ENCODE measurements at regions of chr10 and their contacts with region 1.

Region 1: DNA sequence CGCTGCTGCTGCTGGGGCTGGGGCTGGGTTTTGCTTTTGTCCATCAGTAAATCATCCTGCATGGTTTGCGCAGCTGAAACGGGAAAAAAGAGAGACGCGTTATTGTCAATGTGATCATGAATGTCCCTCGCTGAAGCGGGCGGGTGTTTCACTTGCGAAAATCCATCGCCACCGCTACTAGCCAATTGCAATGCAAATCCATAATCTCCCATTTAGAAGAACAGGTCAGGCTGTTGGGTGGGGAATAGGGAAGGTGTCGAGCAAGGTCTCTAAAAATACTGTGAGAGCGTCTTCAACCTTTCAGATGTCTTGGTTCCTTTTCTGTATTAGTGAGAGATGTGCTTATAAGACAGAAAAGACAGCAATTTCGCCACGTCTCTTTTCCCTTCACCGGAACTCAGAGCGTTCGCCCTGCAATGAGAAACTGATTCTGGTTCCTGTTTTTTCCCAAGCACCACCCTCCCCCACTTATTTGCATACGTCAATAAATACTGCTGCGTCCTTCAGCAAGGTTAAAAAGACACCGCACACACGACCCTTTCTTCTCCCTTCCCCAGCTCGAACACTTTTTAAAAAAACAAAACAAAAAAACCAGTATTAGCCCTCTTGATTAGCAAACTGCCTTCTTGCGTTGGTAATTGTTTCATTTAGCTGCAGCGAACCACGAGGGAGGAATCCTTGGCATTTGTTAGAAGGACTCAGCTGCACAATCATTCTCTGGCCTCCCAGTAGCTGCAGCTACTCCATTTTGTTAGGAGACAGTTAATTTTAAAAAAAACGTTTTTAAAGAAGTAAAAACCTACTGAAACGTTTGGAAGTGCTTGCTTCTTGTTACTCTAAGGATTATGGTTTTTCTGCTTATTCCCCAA is 50.4 kb downstream of the CPEB3 start:
- DNase-seq: peak; percentile 38
- H3K4me3 Mint-ChIP-seq: peak overlapping the region; percentile 72
- H3K27ac Mint-ChIP-seq: no peak overlapping the region
- H3K4me1 Mint-ChIP-seq: peaks cover 33% of the 10 kb centered on the region
- H3K27me3 Mint-ChIP-seq: peaks cover 9% of the 10 kb centered on the region

Region 2: DNA sequence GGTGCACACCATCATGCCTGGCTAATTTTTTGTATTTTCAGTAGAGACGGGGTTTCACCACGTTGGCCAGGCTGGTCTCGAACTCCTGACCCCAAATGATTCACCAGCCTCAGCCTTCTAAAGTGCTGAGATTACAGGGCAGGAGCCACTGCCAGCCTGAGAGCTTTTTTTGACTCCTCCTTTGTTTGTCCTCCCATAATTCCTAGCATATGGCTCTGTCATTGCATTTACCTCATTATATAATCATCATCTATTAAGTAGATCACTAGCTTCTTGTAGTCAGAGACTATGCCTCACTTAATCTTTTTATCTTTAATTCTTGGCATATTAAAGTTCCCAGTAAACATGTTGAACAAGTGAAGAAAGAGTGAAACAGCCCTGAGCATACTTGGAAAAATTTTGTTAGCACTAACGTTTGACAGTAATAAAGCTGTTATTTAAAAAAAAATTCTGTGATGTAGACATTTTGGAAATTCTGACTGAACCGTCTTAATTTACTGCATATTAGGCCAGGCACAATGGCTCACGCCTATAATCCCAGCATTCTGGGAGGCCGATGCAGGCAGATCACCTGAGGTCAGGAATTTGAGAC is 31.7 kb before region 1 on chr10:
- CTCF ChIA-PET with region 1: no interaction called
- POLR2A ChIA-PET with region 1: no interaction called
- intact Hi-C with region 1: loop called (anchors 2 kb)
- DNase-seq: peak; percentile 14
- H3K4me3 Mint-ChIP-seq: no peak overlapping the region
- H3K27ac Mint-ChIP-seq: no peak overlapping the region
- H3K4me1 Mint-ChIP-seq: peaks cover 15% of the 10 kb centered on the region
- H3K27me3 Mint-ChIP-seq: peaks cover 4% of the 10 kb centered on the region

Region 3: DNA sequence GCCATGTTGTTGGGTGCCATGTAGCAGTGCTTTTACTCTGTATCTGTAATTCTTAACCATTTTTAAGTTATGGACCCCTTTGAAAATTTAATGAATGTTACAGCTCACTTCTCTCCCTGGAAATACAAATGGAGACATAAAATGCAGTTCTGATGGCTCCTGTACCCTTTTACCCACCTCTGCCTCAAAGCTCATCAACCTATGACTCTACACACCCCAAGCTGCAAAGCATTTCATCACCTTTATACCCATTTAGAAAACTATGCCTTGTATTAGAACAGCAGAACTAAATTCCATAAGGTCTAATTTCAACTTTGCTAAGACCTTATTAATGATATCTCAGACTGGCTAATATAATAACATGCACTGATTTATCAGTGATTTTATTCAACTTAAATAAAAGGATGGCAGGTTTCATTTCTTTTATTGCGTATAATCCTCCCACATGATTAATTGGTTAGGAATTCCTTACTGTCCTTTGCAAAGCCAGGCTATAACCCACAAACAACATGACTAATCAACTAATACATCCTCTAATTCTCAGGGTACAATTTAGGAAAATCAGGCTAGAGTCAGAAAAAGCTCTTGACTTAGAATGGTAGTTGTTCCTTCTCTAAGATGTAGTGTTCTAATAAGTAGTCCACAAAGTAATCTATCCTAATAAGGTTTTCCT is 17.8 kb before region 1 on chr10:
- CTCF ChIA-PET with region 1: no interaction called
- POLR2A ChIA-PET with region 1: no interaction called
- intact Hi-C with region 1: no loop called
- DNase-seq: no peak
- H3K4me3 Mint-ChIP-seq: no peak overlapping the region
- H3K27ac Mint-ChIP-seq: no peak overlapping the region
- H3K4me1 Mint-ChIP-seq: no peaks in the 10 kb centered on the region
- H3K27me3 Mint-ChIP-seq: no peaks in the 10 kb centered on the region

Measured in activated CD4-positive, alpha-beta memory T cell treated with anti-CD3 and anti-CD28 coated beads for 36 hours (primary cell).